ENCODE measurements at regions of chr10 and their contacts with region 1.

Region 1: GRCh38 chr10:598415-599170 is 90.9 kb downstream of the DIP2C start:
- DNase-seq: peak; percentile 99
- H3K4me3 ChIP-seq: no peak overlapping the region
- H3K27me3 ChIP-seq: no peaks in the 10 kb centered on the region
- CTCF ChIP-seq: no peak

Region 2: DNA sequence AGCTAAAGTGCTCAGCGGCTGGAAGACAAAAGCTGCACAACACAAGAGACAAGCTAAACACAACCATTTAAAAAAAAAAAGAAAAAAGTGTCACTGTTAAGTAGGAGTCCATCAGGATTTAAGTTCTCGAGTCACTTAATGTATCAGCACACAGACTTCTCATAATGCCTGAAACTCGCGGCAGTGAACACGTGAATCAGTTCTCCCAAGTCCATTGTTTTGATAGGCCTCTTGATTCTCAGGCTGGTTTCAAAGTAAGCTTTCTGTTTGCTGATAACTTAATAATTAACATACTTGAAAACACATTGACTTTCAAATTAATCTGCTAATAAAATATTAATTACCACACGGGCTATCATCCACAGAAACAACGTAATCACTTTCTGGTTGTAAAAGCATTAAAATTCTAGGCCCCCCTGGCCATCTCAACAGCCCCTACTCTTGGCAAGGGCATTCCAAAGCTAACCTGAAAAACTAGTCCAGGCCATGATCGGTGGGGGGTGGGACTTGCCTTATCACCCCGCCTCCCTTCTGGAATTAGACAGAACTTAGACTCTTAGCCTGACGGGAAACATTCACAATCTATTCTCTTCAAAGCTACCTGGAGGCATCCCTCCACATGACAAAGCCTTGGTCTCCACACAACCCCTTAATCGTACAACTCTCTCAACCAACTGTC is 38.1 kb before region 1 on chr10:
- CTCF ChIA-PET with region 1: no interaction called
- POLR2A ChIA-PET with region 1: interaction called, 14 read pairs
- DNase-seq: no peak
- H3K4me3 ChIP-seq: no peak overlapping the region
- H3K27me3 ChIP-seq: no peaks in the 10 kb centered on the region
- CTCF ChIP-seq: no peak